Activated naive CD4-positive, alpha-beta T cell treated with anti-CD3 and anti-CD28 coated beads for 36 hours (primary cell): ENCODE measurements at regions of chr9 and their contacts with region 1.

Region 1: DNA sequence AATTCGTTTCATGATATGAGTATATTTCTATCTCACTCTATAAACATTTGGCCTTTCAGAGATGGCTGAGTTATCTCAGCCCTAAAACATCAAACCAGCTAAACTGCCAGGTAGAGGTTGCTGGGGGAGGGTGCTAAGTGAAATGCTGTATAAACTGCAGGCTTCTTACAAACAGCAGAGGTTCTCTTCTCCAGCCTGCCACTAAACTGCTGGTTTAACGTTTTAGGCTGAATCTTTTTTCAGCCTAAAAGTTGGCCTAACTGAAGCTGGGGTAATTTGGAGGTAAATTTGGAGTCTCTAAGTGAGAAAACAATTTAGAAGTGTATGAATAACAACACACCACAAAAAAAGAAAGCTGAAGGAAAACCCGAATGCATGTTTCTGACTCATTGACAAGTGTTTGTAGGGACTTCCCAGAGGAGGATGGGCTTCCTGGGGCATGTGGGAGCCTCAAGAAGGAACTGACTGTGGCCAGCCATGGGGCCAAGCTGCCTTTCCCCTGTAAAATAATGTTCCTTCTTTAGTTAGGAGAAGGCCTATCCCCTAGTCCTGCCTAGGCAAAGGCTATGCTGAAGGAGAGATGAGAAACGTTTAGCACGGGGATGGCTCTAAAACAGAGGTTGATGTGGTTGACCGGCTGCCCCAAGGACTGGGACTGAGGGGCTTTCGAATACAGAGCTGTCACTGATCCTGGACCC is 44.3 kb downstream of the SLC28A3 start:
- DNase-seq: peak; percentile 83
- H3K4me3 Mint-ChIP-seq: peak overlapping the region; percentile 52
- H3K27ac Mint-ChIP-seq: peak overlapping the region; percentile 99
- H3K4me1 Mint-ChIP-seq: peaks cover 60% of the 10 kb centered on the region
- H3K27me3 Mint-ChIP-seq: no peaks in the 10 kb centered on the region

Region 2: DNA sequence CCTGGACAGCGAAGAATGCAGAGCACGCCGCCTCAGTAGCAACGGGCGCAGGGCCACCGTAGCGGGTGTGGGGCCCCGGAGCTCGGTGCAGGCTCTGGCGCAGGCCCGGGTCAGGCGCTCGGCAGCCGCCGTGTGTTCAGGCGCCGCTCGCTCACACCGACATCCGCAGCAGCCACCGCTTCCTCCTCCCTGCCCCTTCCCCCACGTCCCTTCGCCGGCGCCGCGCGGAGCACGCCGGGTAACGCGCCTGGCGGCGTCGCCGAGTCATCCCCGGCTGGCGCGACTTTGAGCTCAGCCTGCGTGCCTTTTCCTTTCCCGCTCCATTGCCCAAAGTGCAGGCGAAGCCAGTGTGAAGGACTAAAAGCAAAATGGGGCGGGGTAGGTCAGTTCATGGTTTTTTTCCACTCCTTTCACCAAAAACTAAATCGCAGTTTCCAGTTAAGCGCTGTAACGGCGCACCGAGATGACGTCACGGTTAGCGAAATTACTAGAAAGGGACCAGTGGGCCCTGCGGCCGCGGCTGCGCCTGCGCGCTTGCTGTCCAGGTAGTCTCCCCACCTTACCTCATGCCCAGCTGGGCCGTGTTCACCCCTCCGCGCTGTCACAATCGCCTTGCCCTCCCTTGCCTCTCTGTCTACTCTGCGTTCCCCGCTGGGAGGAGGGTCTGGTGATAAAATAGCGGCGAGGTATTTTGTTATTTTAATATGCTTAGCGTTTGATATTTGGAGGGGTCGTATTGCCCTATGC is 588.4 kb before region 1 on chr9 and contains the start of gene UBQLN1:
- CTCF ChIA-PET with region 1: no interaction called
- intact Hi-C with region 1: loop called (anchors 1 kb)
- DNase-seq: peak; percentile 95
- H3K4me3 Mint-ChIP-seq: peak within 1 kb of the TSS; percentile 89
- H3K27ac Mint-ChIP-seq: peak within 1 kb of the TSS; percentile 98
- H3K4me1 Mint-ChIP-seq: peaks cover 37% of the 10 kb centered on the region
- H3K27me3 Mint-ChIP-seq: no peaks in the 10 kb centered on the region
- total RNA-seq, gene UBQLN1: 84.8 to 87.1 TPM

Region 3: GRCh38 chr9:83937911-83938323 is 358.4 kb before region 1 on chr9:
- CTCF ChIA-PET with region 1: interaction called, 3 read pairs
- intact Hi-C with region 1: loop called (anchors 1 kb)
- DNase-seq: peak; percentile 35
- H3K4me3 Mint-ChIP-seq: no peak overlapping the region
- H3K27ac Mint-ChIP-seq: no peak overlapping the region
- H3K4me1 Mint-ChIP-seq: no peaks in the 10 kb centered on the region
- H3K27me3 Mint-ChIP-seq: no peaks in the 10 kb centered on the region

Region 4: GRCh38 chr9:84271531-84271900 is 24.8 kb before region 1 on chr9:
- CTCF ChIA-PET with region 1: interaction called, 12 read pairs
- intact Hi-C with region 1: loop called (anchors 1 kb)
- DNase-seq: peak; percentile 79
- H3K4me3 Mint-ChIP-seq: peak overlapping the region; percentile 75
- H3K27ac Mint-ChIP-seq: peak overlapping the region; percentile 59
- H3K4me1 Mint-ChIP-seq: peaks cover 9% of the 10 kb centered on the region
- H3K27me3 Mint-ChIP-seq: peaks cover 34% of the 10 kb centered on the region

Region 5: DNA sequence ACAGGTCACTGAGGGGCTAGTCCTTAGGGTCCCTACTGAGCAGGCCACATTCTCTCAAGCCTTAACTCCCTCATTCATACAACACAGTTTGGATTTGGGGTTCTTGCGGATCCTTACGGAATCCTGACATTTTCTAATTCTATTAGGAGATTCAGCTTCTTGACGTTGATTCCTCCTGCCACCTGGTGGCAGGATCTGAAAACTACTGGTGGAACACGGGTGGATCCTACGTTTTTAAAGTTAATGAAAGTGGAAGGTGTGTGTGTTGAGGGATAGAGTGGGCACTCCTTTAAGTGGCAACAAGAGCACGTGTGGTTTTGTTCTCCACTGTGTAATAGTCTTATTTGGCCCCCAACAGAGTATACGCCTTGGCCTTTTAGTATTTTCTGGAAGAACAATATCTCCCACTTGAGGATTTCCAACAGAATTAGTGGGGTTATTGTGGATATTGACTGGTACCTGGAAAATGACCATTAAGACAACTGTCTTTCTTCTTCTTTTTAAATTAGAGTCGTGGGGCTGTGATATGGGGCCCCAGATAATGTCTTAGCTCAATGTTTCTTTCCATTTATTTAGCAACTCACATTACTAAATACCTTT is 19.1 kb after region 1 on chr9:
- CTCF ChIA-PET with region 1: interaction called, 21 read pairs
- intact Hi-C with region 1: loop called (anchors 1 kb)
- DNase-seq: peak; percentile 79
- H3K4me3 Mint-ChIP-seq: no peak overlapping the region
- H3K27ac Mint-ChIP-seq: no peak overlapping the region
- H3K4me1 Mint-ChIP-seq: peaks cover 14% of the 10 kb centered on the region
- H3K27me3 Mint-ChIP-seq: no peaks in the 10 kb centered on the region

Region 6: DNA sequence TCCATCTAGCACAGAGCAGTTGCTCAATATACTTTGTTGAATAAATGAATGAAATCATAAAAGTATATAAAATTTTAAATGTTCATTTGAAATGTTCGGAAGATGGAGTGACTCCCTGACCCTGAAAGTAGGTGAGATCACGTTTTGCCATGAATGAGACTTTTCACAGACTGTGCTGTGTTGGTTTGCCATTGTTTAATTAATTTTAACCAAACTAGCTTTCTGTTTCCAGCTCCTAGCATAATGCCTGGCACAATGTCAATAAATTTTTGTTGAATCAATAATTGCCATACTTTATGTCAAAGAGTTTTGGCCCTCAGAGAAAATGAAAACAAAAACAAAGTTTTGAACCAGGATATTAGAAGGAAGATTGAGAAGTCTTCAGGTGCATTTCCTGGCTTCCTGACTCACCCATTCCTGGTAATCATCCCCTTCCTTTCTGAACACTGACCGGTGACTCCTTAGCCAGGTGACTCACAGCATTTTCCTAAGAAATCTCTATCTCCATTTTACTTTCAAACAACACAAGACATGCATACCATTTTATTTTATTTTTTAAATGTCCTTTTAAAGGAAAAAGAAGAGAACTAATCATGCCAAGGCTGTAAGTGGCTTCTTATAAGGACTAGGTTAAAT is 29.2 kb after region 1 on chr9:
- CTCF ChIA-PET with region 1: no interaction called
- intact Hi-C with region 1: no loop called
- DNase-seq: no peak
- H3K4me3 Mint-ChIP-seq: no peak overlapping the region
- H3K27ac Mint-ChIP-seq: no peak overlapping the region
- H3K4me1 Mint-ChIP-seq: no peaks in the 10 kb centered on the region
- H3K27me3 Mint-ChIP-seq: peaks cover 9% of the 10 kb centered on the region